ENCODE measurements at regions of chr12 and their contacts with region 1.

Region 1: DNA sequence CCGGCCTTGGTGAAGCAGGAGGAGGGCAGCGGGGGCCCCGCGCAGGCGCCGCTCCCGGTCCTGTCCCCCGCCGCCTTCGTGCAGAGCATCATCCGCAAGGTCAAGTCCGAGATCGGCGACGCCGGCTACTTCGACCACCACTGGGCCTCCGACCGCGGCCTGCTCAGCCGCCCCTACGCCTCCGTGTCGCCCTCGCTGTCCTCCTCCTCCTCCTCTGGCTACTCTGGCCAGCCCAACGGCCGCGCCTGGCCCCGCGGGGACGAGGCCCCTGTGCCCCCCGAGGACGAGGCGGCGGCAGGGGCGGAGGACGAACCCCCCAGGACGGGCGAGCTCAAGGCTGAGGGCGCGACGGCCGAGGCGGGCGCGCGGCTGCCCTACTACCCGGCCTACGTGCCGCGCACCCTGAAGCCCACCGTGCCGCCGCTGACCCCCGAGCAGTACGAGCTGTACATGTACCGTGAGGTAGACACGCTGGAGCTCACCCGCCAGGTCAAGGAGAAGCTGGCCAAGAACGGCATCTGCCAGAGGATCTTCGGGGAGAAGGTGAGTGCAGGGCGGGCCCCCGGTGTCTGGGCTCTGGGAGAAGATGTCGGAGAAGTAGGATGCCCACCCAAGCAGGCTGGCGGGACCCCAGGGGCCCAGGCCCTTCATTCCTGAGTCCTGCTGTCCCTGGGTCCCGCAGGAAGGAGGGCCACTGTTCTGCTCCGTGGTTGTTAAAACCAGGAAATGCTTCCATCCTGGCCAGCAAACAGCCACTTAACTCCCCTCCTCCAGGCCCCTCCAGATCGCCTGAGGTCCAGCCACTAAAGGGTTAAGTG is 48.5 kb downstream of the PHETA1 start:
- DNase-seq: no peak
- H3K4me3 ChIP-seq: no peak overlapping the region
- H3K27ac ChIP-seq: no peak overlapping the region
- H3K4me1 ChIP-seq: no peaks in the 10 kb centered on the region
- H3K27me3 ChIP-seq: no peaks in the 10 kb centered on the region
- CTCF ChIP-seq: no peak
- EP300 ChIP-seq: no peak
- POLR2A ChIP-seq: no peak

Region 2: DNA sequence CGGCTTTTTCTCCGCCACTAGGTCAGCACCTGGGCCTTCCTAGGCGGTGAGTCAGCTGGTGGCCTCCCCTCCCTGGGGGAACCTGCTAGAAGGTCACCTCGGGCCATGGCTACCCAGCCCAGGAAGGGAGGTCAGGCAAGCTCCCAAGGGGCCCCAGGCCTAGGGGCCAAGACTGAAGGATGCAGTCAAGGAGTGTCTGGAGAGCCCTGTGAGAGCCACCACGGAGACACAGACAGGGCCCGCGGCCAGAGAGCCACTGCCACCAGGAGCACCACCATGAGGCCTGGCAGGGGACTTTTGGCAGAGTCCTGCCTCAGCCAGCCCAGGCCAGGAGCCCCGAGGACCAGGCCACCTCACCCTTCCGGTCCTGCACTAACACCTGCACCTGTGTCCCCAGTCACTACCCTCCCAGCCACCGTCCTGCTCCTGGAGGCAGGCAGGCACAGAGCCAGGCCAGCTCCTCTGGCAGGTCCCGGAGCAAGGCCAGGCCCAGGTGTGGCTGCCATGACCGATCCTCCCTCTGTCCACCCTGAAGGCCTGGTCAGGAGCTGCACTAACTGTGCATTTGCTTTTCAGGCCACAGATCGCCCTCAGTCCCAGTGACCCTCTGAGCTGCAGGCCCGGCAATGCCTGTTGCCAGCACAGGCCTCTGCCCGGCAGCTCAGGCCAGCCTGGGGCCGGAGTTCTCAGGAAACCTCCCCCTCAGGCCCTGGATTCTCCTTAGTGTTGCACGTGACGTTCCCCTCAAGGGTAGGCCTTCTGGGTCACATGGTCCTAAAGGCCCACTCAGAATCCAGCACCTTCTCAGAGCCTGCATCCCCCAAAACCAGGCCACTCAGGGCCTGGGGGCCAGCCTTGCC is 41.5 kb after region 1 on chr12:
- in situ Hi-C with region 1: no loop called
- intact Hi-C with region 1: loop called (anchors 1 kb)
- DNase-seq: no peak
- H3K4me3 ChIP-seq: no peak overlapping the region
- H3K27ac ChIP-seq: no peak overlapping the region
- H3K4me1 ChIP-seq: peaks cover 0 to under 1% (median under 1%) of the 10 kb centered on the region in 4 donors
- H3K27me3 ChIP-seq: no peaks in the 10 kb centered on the region
- CTCF ChIP-seq: no peak
- EP300 ChIP-seq: no peak
- POLR2A ChIP-seq: no peak

Region 3: GRCh38 chr12:112524676-112525505 is 1204.4 kb after region 1 on chr12:
- in situ Hi-C with region 1: no loop called
- intact Hi-C with region 1: no loop called
- DNase-seq: no peak
- H3K4me3 ChIP-seq: no peak overlapping the region
- H3K27ac ChIP-seq: no peak overlapping the region
- H3K4me1 ChIP-seq: no peaks in the 10 kb centered on the region
- H3K27me3 ChIP-seq: no peaks in the 10 kb centered on the region
- CTCF ChIP-seq: no peak
- EP300 ChIP-seq: no peak
- POLR2A ChIP-seq: no peak